Cardiac septum (tissue), 1 donor: ENCODE measurements at regions of chr16 and their contacts with region 1.

Region 1: GRCh38 chr16:85610508-85611332 is 2.4 kb upstream of the GSE1 start:
- DNase-seq: peak; percentile 94

Region 2: GRCh38 chr16:85114909-85115567 is 495.7 kb before region 1 on chr16:
- intact Hi-C with region 1: loop called (anchors 1 kb)
- DNase-seq: peak; percentile 95

Region 3: GRCh38 chr16:85393674-85394483 is 216.8 kb before region 1 on chr16:
- intact Hi-C with region 1: loop called (anchors 2 kb)
- DNase-seq: peak; percentile 83

Region 4: GRCh38 chr16:85461814-85462713 is 148.7 kb before region 1 on chr16:
- intact Hi-C with region 1: loop called (anchors 5 kb)
- DNase-seq: no peak

Region 5: GRCh38 chr16:85628645-85629044 is 17.9 kb after region 1 on chr16:
- intact Hi-C with region 1: loop called (anchors 2 kb)
- DNase-seq: no peak